BJ (cell line): ENCODE measurements at regions of chr9 and their contacts with region 1.

Region 1: GRCh38 chr9:129726322-129727160 is 26.3 kb downstream of the PTGES start:
- DNase-seq: peak; percentile 45
- H3K4me3 ChIP-seq: no peak overlapping the region
- H3K27me3 ChIP-seq: no peaks in the 10 kb centered on the region
- CTCF ChIP-seq: peak; percentile 99

Region 2: GRCh38 chr9:129131300-129132145 is 595.0 kb before region 1 on chr9:
- CTCF ChIA-PET with region 1: interaction called, 11 read pairs
- POLR2A ChIA-PET with region 1: no interaction called
- DNase-seq: no peak
- H3K4me3 ChIP-seq: no peak overlapping the region
- H3K27me3 ChIP-seq: no peaks in the 10 kb centered on the region
- CTCF ChIP-seq: peak; percentile 99

Region 3: GRCh38 chr9:129696938-129697650 is 29.4 kb before region 1 on chr9:
- CTCF ChIA-PET with region 1: interaction called, 24 read pairs
- POLR2A ChIA-PET with region 1: interaction called, 6 read pairs
- DNase-seq: no peak
- H3K4me3 ChIP-seq: peak overlapping the region; percentile 38
- H3K27me3 ChIP-seq: no peaks in the 10 kb centered on the region
- CTCF ChIP-seq: no peak

Region 4: DNA sequence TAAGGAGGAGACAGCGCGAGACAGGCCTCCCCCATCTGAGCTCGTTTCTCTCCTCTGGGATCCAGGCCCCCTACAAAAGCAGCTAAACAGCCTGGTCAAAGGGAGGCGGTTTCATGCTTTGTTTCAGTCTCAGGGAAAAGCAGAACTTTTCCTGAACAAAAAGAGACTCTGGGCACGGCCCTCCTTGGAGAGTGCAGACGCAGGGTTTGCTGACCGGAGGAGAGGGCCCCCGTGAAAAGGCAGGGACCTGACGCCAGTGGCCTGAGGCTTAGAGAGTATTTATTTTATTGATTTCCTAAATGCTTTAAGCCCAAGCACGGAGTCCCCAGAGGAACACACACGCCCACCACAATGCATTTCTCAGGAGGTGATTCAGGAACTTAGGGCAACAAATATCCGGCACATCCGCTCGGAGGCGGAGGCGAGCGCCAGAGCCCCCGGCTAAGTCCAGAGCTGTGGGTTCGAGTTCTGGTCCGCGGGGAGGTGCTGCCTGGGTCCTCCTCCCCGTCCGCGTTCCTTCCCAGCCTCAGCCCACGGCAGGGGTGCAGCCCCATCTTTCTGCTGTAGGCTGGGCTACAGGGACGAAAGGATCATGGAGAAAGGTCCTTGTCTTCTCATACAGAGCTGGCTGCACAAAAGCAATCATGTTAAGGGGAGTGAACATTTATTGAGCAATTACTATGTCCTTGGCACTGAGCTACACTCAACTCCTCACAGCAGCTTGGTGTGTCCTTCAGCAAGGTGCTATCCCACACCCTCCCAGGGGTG is 13.7 kb before region 1 on chr9:
- CTCF ChIA-PET with region 1: interaction called, 60 read pairs
- POLR2A ChIA-PET with region 1: no interaction called
- DNase-seq: peak; percentile 84
- H3K4me3 ChIP-seq: no peak overlapping the region
- H3K27me3 ChIP-seq: no peaks in the 10 kb centered on the region
- CTCF ChIP-seq: 0 out of 2 replicates have a peak, but pooled peaks have one; percentile 13

Region 5: DNA sequence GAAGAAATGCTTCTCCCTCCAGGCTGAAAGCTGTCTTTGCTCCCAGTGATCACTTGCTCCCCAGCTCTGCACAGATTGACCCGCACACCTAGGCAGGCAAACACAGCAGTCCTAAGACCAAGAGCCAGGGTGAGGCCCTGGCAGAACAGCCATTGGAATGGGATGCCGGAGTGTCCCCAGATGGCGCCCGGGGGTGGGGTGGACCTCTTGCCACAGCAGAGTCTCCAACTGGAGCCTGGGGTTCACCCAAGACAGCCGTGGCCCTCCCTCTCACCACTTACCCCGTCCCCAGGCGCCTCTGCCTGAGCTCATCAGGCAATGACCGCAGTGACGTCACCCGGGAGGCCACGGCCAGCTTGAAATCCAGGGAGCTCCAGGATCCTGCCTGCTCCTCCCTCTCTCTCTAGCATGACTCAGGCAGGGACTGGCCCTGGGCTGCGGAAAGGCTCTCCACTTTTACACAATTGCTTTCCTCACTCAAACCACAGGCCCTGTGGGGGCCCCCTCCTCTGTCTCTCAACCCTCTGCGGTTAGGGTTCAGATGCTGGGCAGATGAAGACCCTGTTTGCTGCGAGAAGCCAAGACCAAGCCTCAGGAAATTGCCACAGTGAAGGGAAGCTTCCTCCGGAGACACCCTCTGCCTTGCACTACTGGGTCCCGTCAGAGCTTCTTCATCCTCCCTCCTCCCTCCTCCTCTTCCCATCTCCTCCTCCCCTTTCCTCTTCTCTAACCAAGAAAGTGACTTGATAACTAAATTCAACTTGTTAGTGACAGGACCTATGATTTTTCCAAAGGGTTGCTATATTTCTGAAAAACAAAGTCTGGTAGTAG is 50.6 kb after region 1 on chr9:
- CTCF ChIA-PET with region 1: interaction called, 46 read pairs
- POLR2A ChIA-PET with region 1: interaction called, 4 read pairs
- DNase-seq: peak; percentile 97
- H3K4me3 ChIP-seq: peak overlapping the region; percentile 20
- H3K27me3 ChIP-seq: no peaks in the 10 kb centered on the region
- CTCF ChIP-seq: no peak

Region 6: GRCh38 chr9:129796029-129796910 is 69.7 kb after region 1 on chr9:
- CTCF ChIA-PET with region 1: interaction called, 30 read pairs
- POLR2A ChIA-PET with region 1: no interaction called
- DNase-seq: no peak
- H3K4me3 ChIP-seq: no peak overlapping the region
- H3K27me3 ChIP-seq: peaks cover 6% of the 10 kb centered on the region
- CTCF ChIP-seq: no peak